GM12878 (cell line): ENCODE measurements at regions of chr4 and their contacts with region 1.

Region 1: DNA sequence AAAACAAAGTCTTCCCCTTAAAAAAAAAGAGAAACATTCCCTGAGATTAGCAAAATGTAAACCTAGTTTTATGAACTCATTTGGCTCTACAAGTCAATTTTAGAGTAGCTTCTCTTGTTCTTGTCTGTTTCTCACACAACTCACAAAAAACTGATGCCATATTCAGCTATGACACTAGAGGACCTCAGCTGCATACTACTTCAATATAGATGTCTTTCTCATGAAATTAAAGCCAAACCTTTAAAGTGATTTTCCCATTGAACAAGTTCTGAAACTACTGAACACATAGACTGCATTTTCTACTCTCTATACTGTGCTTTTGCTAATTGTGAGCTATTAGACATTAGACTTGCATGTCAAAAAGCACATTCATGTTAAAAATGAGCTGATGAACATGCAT is 49.8 kb downstream of the TBCK start:
- DNase-seq: peak; percentile 7
- ATAC-seq: peak; percentile 70
- H3K4me3 ChIP-seq: no peak overlapping the region
- H3K27ac ChIP-seq: no peak overlapping the region
- H3K4me1 ChIP-seq: no peaks in the 10 kb centered on the region
- H3K27me3 ChIP-seq: no peaks in the 10 kb centered on the region
- CTCF ChIP-seq: peak; percentile 47 to 60 (median 59); a peak in 5 of 6 replicates
- EP300 ChIP-seq: no peak
- POLR2A ChIP-seq: no peak
- RAD21 ChIP-seq: peak; percentile 83

Region 2: GRCh38 chr4:105990939-105991338 is 275.3 kb before region 1 on chr4:
- CTCF ChIA-PET with region 1: no interaction called
- POLR2A ChIA-PET with region 1: no interaction called
- RAD21 ChIA-PET with region 1: no interaction called
- SMC1A ChIA-PET with region 1: no interaction called
- in situ Hi-C with region 1: no loop called
- intact Hi-C with region 1: no loop called
- DNase-seq: no peak
- ATAC-seq: peak; percentile 49
- H3K4me3 ChIP-seq: no peak overlapping the region
- H3K27ac ChIP-seq: no peak overlapping the region
- H3K4me1 ChIP-seq: no peaks in the 10 kb centered on the region
- H3K27me3 ChIP-seq: no peaks in the 10 kb centered on the region; a peak in 1 of 4 replicates
- CTCF ChIP-seq: no peak
- EP300 ChIP-seq: no peak
- POLR2A ChIP-seq: no peak
- RAD21 ChIP-seq: no peak

Region 3: GRCh38 chr4:106277140-106277675 is 11.0 kb after region 1 on chr4:
- CTCF ChIA-PET with region 1: interaction called, 16 read pairs
- POLR2A ChIA-PET with region 1: no interaction called
- RAD21 ChIA-PET with region 1: no interaction called
- SMC1A ChIA-PET with region 1: interaction called, 6 read pairs
- in situ Hi-C with region 1: no loop called
- intact Hi-C with region 1: no loop called
- DNase-seq: no peak
- ATAC-seq: no peak
- H3K4me3 ChIP-seq: no peak overlapping the region
- H3K27ac ChIP-seq: no peak overlapping the region
- H3K4me1 ChIP-seq: no peaks in the 10 kb centered on the region
- H3K27me3 ChIP-seq: no peaks in the 10 kb centered on the region
- CTCF ChIP-seq: no peak
- EP300 ChIP-seq: no peak
- POLR2A ChIP-seq: no peak
- RAD21 ChIP-seq: no peak

Region 4: GRCh38 chr4:106502106-106502699 is 236.0 kb after region 1 on chr4:
- CTCF ChIA-PET with region 1: interaction called, 16 read pairs
- POLR2A ChIA-PET with region 1: no interaction called
- RAD21 ChIA-PET with region 1: no interaction called
- SMC1A ChIA-PET with region 1: interaction called, 9 read pairs
- in situ Hi-C with region 1: loop called (anchors 10 kb)
- intact Hi-C with region 1: loop called (anchors 1 kb)
- DNase-seq: no peak
- ATAC-seq: peak; percentile 93
- H3K4me3 ChIP-seq: no peak overlapping the region
- H3K27ac ChIP-seq: no peak overlapping the region
- H3K4me1 ChIP-seq: no peaks in the 10 kb centered on the region
- H3K27me3 ChIP-seq: no peaks in the 10 kb centered on the region
- CTCF ChIP-seq: peak; percentile 60 to 76 (median 69); a peak in 5 of 6 replicates
- EP300 ChIP-seq: no peak
- POLR2A ChIP-seq: no peak
- RAD21 ChIP-seq: peak; percentile 77

Region 5: DNA sequence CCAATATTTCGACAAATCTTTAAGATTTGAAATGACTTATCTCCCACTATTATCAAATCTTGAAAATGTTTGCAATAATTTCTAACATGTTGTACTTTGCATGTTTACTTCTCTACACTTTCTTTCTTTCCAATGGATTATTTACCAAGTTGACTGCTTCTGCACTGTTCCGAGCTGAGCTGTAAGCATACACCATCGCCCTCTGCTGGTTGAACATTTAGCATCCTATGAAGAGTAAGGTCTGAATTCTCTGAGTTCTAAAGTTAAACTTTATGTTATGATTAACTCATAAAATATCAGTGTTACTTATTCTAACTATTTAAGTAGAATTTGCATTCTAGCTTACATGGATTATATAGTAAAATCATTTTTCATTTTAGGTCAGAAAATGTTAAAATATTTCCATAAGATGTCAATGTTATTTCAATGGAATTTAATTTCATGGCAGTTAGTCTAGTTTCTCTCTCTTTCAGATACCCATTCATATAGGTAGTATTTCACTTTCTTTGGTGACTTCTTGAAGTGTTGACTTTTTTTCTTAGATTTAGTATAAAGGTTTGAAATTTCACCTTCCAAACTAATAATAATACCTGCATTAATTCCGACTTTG is 632.5 kb after region 1 on chr4:
- CTCF ChIA-PET with region 1: interaction called, 15 read pairs
- POLR2A ChIA-PET with region 1: no interaction called
- RAD21 ChIA-PET with region 1: interaction called, 4 read pairs
- SMC1A ChIA-PET with region 1: interaction called, 7 read pairs
- in situ Hi-C with region 1: no loop called
- intact Hi-C with region 1: loop called (anchors 5 kb)
- DNase-seq: no peak
- ATAC-seq: peak; percentile 88
- H3K4me3 ChIP-seq: no peak overlapping the region
- H3K27ac ChIP-seq: no peak overlapping the region
- H3K4me1 ChIP-seq: no peaks in the 10 kb centered on the region
- H3K27me3 ChIP-seq: no peaks in the 10 kb centered on the region
- CTCF ChIP-seq: peak; percentile 63 to 75 (median 65)
- EP300 ChIP-seq: no peak
- POLR2A ChIP-seq: no peak
- RAD21 ChIP-seq: peak; percentile 64